Ovary (tissue), 10 donors: ENCODE measurements at regions of chr10 and their contacts with region 1.

Region 1: GRCh38 chr10:110919971-110920881 is 822 bp downstream of the SHOC2 start:
- DNase-seq: peak; percentile 35 to 64 (median 64)
- H3K4me3 ChIP-seq: peak overlapping the region; percentile 66
- H3K27ac ChIP-seq: peak overlapping the region; percentile 86 to 92
- H3K4me1 ChIP-seq: no peaks in the 10 kb centered on the region
- H3K27me3 ChIP-seq: no peaks in the 10 kb centered on the region
- CTCF ChIP-seq: no peak
- EP300 ChIP-seq: no peak
- POLR2A ChIP-seq: no peak

Region 2: DNA sequence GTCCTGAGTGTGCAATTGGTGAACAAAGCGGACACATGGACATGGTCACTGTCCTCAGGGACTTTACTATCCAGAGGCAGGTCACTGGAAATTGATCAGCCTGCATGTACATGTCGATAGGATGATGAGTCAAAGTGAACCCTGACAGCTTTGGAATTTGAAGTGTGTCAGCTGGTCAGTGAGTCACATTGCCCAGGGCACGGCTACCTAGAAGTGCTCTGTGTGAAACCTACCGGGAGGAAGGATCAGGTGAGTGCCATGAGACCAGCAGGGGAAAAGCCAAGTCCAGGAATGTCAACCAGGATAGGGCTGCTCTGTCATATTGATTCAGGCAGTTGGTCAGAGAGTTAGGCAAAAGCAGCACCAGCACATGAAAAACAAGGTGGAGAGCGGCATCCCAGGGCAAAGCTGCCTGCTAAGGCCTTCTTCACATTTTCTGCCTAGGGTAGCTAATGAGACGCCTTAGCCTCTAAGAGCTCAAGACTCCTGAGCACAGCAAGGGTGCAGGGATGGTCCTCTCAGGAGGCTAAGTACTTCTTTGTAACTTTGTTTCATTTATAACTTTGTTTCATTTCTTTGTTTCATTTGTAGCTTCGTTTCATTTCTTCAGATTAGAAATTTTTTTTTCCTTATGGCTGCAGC is 67.8 kb before region 1 on chr10:
- intact Hi-C with region 1: no loop called
- DNase-seq: no peak
- H3K4me3 ChIP-seq: no peak overlapping the region
- H3K27ac ChIP-seq: no peak overlapping the region
- H3K4me1 ChIP-seq: peaks cover 3% of the 10 kb centered on the region
- H3K27me3 ChIP-seq: no peaks in the 10 kb centered on the region
- CTCF ChIP-seq: no peak
- EP300 ChIP-seq: no peak
- POLR2A ChIP-seq: no peak

Region 3: GRCh38 chr10:112173206-112173605 is 1253.0 kb after region 1 on chr10:
- intact Hi-C with region 1: loop called in 1 of 4 experiments (anchors 5 kb)
- DNase-seq: no peak
- H3K4me3 ChIP-seq: no peak overlapping the region
- H3K27ac ChIP-seq: no peak overlapping the region
- H3K4me1 ChIP-seq: no peaks in the 10 kb centered on the region
- H3K27me3 ChIP-seq: no peaks in the 10 kb centered on the region
- CTCF ChIP-seq: no peak
- EP300 ChIP-seq: no peak
- POLR2A ChIP-seq: no peak